Activated CD4-positive, alpha-beta memory T cell treated with anti-CD3 and anti-CD28 coated beads for 36 hours (primary cell): ENCODE measurements at regions of chr18 and their contacts with region 1.

Region 1: DNA sequence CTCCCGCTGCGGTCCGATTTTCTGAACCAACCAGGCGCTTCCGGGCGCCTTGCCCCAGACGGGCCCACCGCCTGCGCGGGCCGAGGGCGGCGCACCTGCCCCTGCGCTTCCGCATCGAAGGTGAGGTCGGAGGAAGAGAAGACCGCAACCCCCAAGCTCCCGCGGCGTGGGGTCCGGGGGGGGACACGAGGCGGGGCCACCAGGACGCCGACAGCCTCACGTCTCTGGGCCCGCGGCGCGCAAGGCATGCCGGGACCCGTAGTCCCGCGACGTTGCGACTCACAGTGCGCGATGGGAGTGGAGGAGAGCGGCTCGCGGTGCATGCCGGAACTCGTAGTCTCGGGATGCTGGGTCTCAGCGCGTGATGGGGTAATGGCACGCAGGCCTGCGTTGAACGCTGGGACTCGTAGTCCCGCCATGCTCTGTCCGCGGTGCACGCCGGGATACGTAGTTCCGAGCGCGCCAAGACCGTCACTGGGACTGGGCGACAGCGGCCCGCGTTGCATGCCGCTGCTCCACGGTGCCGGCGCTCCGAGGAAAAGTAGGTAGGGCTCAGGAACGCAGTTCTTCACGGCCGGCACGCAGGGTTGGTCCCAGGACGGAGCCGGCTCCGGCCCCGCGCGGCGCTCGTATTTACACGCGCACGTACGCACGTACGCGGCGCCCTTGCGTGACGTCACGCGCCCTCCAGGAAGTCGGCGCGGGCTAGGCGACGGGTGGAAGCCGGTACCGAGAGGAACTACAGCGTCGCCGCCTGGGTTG is at the start of gene CTDP1:
- DNase-seq: peak; percentile 99
- H3K4me3 Mint-ChIP-seq: peak within 1 kb of the TSS; percentile 90
- H3K27ac Mint-ChIP-seq: peak within 1 kb of the TSS; percentile 98
- H3K4me1 Mint-ChIP-seq: peaks cover 63% of the 10 kb centered on the region
- H3K27me3 Mint-ChIP-seq: no peaks in the 10 kb centered on the region
- total RNA-seq, gene CTDP1: 35.4 to 36.0 TPM

Region 2: GRCh38 chr18:79393635-79394533 is 285.4 kb before region 1 on chr18:
- CTCF ChIA-PET with region 1: no interaction called
- POLR2A ChIA-PET with region 1: interaction called, 4 read pairs
- intact Hi-C with region 1: loop called (anchors 2 kb)
- DNase-seq: peak; percentile 67
- H3K4me3 Mint-ChIP-seq: peak overlapping the region; percentile 77
- H3K27ac Mint-ChIP-seq: peak overlapping the region; percentile 74
- H3K4me1 Mint-ChIP-seq: peaks cover 25% of the 10 kb centered on the region
- H3K27me3 Mint-ChIP-seq: peaks cover 4% of the 10 kb centered on the region

Region 3: GRCh38 chr18:79523736-79524180 is 155.5 kb before region 1 on chr18:
- CTCF ChIA-PET with region 1: no interaction called
- POLR2A ChIA-PET with region 1: interaction called, 7 read pairs
- intact Hi-C with region 1: loop called (anchors 1 kb)
- DNase-seq: peak; percentile 88
- H3K4me3 Mint-ChIP-seq: peak overlapping the region; percentile 75
- H3K27ac Mint-ChIP-seq: peak overlapping the region; percentile 99
- H3K4me1 Mint-ChIP-seq: peaks cover 63% of the 10 kb centered on the region
- H3K27me3 Mint-ChIP-seq: no peaks in the 10 kb centered on the region

Region 4: DNA sequence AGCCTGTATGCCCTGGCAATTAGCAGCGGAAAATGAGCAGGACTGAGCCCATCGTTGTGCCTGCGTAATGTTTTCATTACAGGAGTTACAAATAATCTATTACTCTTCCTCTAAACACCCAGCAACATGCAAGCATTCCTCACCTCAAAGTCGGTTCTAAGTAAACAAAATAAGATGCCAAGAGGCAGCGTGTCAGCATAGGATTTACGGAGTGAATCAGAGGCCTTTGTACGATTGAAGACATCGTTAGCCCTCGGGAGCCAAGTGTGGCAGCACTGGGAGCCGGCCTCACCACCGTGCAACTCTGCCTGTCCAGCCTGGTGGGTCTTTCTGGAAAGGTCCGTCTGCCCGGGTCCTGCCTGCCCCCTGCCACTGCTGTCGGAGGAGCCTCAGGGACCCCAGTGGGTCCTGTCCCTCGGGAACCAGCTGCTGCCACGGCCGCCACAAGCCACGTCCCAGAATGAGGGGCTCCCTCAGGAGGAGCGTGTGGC is 79.8 kb before region 1 on chr18:
- CTCF ChIA-PET with region 1: no interaction called
- POLR2A ChIA-PET with region 1: no interaction called
- intact Hi-C with region 1: no loop called
- DNase-seq: no peak
- H3K4me3 Mint-ChIP-seq: no peak overlapping the region
- H3K27ac Mint-ChIP-seq: no peak overlapping the region
- H3K4me1 Mint-ChIP-seq: no peaks in the 10 kb centered on the region
- H3K27me3 Mint-ChIP-seq: peaks cover 4% of the 10 kb centered on the region

Region 5: GRCh38 chr18:79644006-79644665 is 35.2 kb before region 1 on chr18:
- CTCF ChIA-PET with region 1: no interaction called
- POLR2A ChIA-PET with region 1: no interaction called
- intact Hi-C with region 1: no loop called
- DNase-seq: peak; percentile 80
- H3K4me3 Mint-ChIP-seq: no peak overlapping the region
- H3K27ac Mint-ChIP-seq: no peak overlapping the region
- H3K4me1 Mint-ChIP-seq: no peaks in the 10 kb centered on the region
- H3K27me3 Mint-ChIP-seq: peaks cover 9% of the 10 kb centered on the region

Region 6: DNA sequence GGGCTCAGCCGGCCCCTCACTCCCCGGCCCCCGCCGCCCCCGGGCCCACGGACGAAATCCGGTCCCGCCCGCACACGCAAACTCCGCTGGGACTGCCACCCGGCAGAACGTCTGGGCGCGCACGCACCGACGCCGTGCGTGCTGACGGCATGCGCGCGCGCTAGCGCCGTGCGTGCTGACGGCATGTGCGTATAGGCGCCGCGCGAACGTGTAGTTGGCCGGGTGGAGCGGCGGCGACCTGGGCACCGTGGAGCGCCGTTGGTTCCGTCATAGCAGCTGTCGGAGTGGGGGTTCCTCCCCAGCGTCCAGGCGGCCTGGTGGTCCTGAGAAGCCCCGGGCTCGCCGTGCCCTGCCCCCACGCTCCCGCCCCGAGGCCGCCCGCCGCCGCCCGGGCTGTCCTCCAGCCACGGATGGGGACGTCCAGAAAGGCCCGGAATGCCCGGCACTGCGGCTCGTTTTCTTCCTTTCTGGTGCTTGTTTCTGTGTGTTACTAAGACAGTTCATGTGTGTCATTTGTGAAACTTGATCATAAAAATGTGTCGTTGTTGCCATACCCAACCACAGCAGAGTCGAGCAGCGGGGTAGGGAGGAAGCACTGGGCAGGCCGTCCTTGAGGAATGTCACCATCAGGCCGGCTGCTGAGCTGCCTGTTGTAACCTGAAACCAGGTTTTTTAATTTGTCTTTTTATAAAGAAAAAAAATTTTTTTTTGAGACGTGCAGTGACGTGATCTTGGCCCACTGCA is 309.3 kb after region 1 on chr18 and contains the start of gene TXNL4A:
- CTCF ChIA-PET with region 1: no interaction called
- POLR2A ChIA-PET with region 1: interaction called, 3 read pairs
- intact Hi-C with region 1: loop called (anchors 1 kb)
- DNase-seq: peak; percentile 90
- H3K4me3 Mint-ChIP-seq: peak within 1 kb of the TSS; percentile 94
- H3K27ac Mint-ChIP-seq: peak within 1 kb of the TSS; percentile 92
- H3K4me1 Mint-ChIP-seq: peaks cover 30% of the 10 kb centered on the region
- H3K27me3 Mint-ChIP-seq: no peaks in the 10 kb centered on the region
- total RNA-seq, gene TXNL4A: 169 to 175 TPM

Region 7: DNA sequence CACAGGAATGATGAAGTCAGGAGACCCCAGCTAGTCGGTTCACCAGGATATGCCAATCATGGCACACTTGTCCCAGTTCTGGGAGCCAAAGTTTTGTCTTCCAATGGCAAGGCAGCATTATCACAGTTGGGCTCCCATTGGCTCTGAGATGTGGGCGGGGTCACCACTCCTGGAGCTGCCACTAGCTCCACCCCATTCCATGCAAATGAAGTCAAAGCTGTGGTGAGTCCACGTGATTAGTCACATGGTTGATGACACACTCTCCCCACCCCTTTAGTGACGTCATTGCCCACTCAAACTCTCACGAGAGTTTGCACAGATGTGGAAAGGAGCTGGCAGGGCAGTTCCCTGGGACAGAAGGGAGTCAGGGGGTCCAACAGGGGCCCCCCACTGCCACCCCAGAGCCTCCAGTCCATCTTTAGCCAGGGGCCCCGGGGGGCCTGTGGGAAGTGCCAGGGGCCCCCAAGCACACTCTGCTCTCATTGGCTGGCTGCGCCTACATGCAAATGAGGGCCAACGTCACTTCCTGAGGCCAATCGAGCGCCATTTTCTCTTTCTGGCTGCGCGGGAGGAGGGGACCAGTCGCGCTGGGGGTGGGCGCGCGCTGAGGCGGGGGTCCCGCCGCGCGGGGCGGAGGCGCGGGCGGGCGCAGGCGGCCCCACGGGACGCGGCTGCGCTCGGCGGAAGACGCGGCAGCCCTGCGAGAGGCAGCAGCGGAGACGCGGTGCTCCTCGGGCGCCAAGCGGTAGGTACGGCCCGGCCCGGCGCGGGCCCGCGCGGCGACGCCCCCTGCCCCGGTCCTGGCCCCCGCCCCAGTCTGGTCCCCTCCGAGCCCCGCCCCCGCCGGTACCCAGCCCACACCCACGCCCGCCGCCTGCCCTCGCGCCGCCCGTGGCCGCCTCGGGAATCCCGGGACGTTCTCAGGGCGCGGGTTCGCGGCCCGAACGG is 429.7 kb after region 1 on chr18 and contains the start of gene ADNP2:
- CTCF ChIA-PET with region 1: no interaction called
- POLR2A ChIA-PET with region 1: no interaction called
- intact Hi-C with region 1: loop called (anchors 1 kb)
- DNase-seq: peak; percentile 91
- H3K4me3 Mint-ChIP-seq: peak within 1 kb of the TSS; percentile 80
- H3K27ac Mint-ChIP-seq: peak within 1 kb of the TSS; percentile 74
- H3K4me1 Mint-ChIP-seq: peaks cover 46% of the 10 kb centered on the region
- H3K27me3 Mint-ChIP-seq: no peaks in the 10 kb centered on the region
- total RNA-seq, gene ADNP2: 19.4 to 21.7 TPM